Caco-2 (cell line): ENCODE measurements at regions of chr7 and their contacts with region 1.

Region 1: GRCh38 chr7:88725754-88726153 is 33.7 kb upstream of the ZNF804B start:
- DNase-seq: no peak
- H3K4me3 ChIP-seq: no peak overlapping the region
- H3K4me3 Mint-ChIP-seq: no peak overlapping the region
- H3K27ac Mint-ChIP-seq: no peak overlapping the region
- H3K4me1 ChIP-seq: no peaks in the 10 kb centered on the region
- H3K4me1 Mint-ChIP-seq: no peaks in the 10 kb centered on the region
- H3K27me3 ChIP-seq: no peaks in the 10 kb centered on the region
- H3K27me3 Mint-ChIP-seq: no peaks in the 10 kb centered on the region
- CTCF ChIP-seq: no peak

Region 2: DNA sequence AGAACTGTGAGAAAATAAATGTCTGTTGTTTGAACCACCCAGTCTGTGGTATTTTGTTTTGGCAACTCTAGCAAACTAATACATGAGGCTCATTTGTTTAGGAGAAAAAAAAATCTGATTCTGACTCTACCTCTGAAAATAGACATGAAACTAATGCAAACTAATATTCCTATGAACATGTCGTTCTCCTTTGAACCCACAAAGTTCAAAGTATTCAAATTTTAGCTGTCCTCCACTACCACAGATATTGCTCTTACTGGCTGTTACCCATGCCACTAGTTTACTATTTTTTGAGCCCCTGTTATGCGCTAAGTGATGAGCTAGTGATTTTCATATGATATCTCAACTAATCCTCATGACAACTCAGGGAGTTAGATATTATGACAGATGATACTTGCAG is 25.0 kb before region 1 on chr7:
- CTCF ChIA-PET with region 1: no interaction called
- POLR2A ChIA-PET with region 1: no interaction called
- intact Hi-C with region 1: loop called (anchors 1 kb)
- DNase-seq: no peak
- H3K4me3 ChIP-seq: no peak overlapping the region
- H3K4me3 Mint-ChIP-seq: no peak overlapping the region
- H3K27ac Mint-ChIP-seq: no peak overlapping the region
- H3K4me1 ChIP-seq: no peaks in the 10 kb centered on the region
- H3K4me1 Mint-ChIP-seq: no peaks in the 10 kb centered on the region
- H3K27me3 ChIP-seq: no peaks in the 10 kb centered on the region; the same call in 1 of the 2 replicates
- H3K27me3 Mint-ChIP-seq: no peaks in the 10 kb centered on the region
- CTCF ChIP-seq: no peak